Activated CD4-positive, alpha-beta T cell treated with anti-CD3 and anti-CD28 coated beads for 36 hours (primary cell): ENCODE measurements at regions of chr22 and their contacts with region 1.

Region 1: GRCh38 chr22:29751669-29752068 is 15.1 kb downstream of the ZMAT5 start:
- DNase-seq: no peak
- ATAC-seq: no peak
- H3K4me3 Mint-ChIP-seq: no peak overlapping the region
- H3K27ac Mint-ChIP-seq: peak overlapping the region; percentile 42
- H3K4me1 Mint-ChIP-seq: peaks cover 6% of the 10 kb centered on the region
- H3K27me3 Mint-ChIP-seq: no peaks in the 10 kb centered on the region

Region 2: DNA sequence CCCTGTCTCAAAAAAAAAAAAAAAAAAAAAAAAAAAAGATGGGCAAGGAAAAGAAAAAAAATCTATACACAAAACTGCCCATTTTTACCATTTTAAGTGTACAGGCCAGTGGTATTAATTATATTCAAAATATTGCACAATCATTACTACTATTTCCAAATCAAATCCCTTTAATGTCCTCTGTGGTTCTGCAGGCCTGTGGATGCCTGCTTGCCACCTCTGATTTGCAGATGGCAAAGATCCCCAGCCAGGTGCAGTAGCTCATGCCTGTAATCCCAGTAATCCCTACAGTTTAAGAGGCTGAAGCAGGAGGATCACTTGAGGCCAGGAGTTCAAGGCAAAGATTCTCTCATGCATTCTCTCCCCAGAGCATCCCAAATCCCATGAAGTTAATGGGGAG is 293.1 kb before region 1 on chr22:
- CTCF ChIA-PET with region 1: no interaction called
- POLR2A ChIA-PET with region 1: no interaction called
- intact Hi-C with region 1: no loop called
- DNase-seq: no peak
- ATAC-seq: no peak
- H3K4me3 Mint-ChIP-seq: no peak overlapping the region
- H3K27ac Mint-ChIP-seq: no peak overlapping the region
- H3K4me1 Mint-ChIP-seq: no peaks in the 10 kb centered on the region
- H3K27me3 Mint-ChIP-seq: no peaks in the 10 kb centered on the region

Region 3: DNA sequence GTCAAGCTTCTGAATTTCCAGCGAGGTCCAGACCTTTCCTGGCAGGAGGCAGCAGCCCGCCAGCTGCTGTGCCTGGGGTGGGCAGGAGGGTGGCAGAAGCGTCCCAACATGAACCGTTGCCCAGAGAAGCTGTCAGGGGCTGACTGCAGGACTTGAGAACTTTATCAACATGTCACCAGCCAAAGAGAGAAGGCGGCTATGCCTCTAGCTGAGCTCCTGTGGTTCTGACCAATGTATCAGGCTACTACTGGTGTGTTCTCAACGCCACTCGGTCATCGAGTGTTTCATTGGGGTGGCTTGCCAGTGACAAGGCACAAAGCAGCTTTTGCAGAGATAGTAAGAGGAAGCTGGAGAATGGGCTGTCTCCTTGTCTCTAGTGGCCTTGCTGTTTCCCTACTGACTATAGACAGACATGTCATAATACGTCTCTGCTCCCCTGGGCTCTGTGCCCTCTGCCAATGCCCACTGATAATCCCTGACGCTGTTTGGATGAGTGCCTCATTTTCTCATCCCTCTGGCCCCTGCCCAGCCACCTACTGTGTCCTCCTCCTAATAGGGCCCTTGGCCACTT is 104.0 kb after region 1 on chr22:
- CTCF ChIA-PET with region 1: no interaction called
- POLR2A ChIA-PET with region 1: no interaction called
- intact Hi-C with region 1: no loop called
- DNase-seq: no peak
- ATAC-seq: no peak
- H3K4me3 Mint-ChIP-seq: no peak overlapping the region
- H3K27ac Mint-ChIP-seq: no peak overlapping the region
- H3K4me1 Mint-ChIP-seq: no peaks in the 10 kb centered on the region
- H3K27me3 Mint-ChIP-seq: no peaks in the 10 kb centered on the region

Region 4: GRCh38 chr22:30336752-30337460 is 585.2 kb after region 1 on chr22:
- CTCF ChIA-PET with region 1: no interaction called
- POLR2A ChIA-PET with region 1: interaction called, 11 read pairs
- intact Hi-C with region 1: no loop called
- DNase-seq: no peak
- ATAC-seq: no peak
- H3K4me3 Mint-ChIP-seq: no peak overlapping the region
- H3K27ac Mint-ChIP-seq: peak overlapping the region; percentile 29
- H3K4me1 Mint-ChIP-seq: peaks cover 43% of the 10 kb centered on the region
- H3K27me3 Mint-ChIP-seq: no peaks in the 10 kb centered on the region